Body of pancreas (tissue), 4 donors: ENCODE measurements at regions of chr4 and their contacts with region 1.

Region 1: DNA sequence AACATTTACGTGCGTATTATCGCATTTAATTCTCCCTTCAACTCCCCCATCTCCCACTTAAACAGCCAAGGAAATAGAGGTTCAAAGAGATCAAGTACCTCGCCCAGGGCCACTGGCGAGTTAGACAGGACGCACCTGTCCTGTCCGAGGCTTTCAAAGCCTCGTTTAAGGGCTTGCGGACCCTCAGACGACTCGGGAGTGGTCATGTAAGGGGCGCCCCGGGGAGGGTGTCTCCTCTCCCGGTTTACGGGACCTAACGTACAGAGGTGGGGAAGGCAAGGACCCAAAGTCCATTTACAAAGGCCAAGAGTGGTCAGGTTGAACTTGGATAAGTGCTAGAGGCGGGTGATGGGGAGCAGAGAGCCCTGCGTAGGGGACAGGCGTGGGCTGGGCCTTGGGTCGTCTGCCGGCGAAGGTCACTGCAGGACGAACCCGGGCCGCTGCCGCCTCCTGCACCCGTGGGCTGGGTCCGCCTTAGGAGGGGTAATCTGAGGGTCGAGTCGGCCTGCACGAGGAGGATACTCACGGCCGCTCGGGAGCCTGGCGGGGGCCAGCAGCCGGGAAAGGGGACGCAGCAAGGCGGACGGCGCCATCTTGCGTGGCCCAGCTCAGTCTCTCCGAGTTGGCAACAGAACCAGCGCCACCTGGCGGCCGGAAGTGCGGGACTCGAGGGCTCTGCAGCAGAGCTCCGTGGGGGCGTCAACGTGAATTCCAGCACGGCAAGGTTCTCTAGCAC is 5.9 kb upstream of the NAA15 start:
- DNase-seq: peak; percentile 96 to 98 (median 97)
- ATAC-seq: peak; percentile 96
- H3K4me3 ChIP-seq: peak overlapping the region; percentile 74 to 75
- H3K27ac ChIP-seq: peak overlapping the region; percentile 78 to 91 (median 86)
- H3K4me1 ChIP-seq: peaks cover 29% of the 10 kb centered on the region
- H3K27me3 ChIP-seq: no peaks in the 10 kb centered on the region
- CTCF ChIP-seq: peak; percentile 94 to 97 (median 95)
- POLR2A ChIP-seq: peak; percentile 46 to 78 (median 73)

Region 2: DNA sequence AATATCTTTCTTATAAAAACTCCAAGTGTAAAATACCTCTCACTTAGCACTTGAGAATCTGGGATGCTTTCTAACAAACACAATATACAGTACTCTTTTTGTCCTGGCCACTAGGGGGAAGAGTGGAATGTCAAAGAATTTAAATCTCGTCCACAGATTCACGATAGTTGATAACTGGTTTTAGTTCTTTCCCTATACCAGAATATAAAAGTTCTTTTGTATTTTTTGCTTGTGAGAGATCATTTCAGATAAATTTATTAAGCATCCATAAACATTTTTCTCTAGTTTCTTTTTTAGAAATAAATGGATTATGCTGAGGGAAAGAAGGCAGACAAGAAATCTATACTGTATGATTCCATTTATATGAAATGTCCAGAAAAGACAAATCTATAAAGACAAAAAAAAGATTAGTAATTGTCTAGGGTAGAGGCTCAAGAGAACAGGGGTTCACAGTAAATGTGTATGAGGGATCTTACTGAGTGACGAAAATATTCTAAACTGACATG is 65.8 kb before region 1 on chr4:
- intact Hi-C with region 1: loop called (anchors 10 kb)
- DNase-seq: peak in 2 of 4 donors; percentile 19 to 37
- ATAC-seq: peak; percentile 78
- H3K4me3 ChIP-seq: no peak overlapping the region
- H3K27ac ChIP-seq: no peak overlapping the region
- H3K4me1 ChIP-seq: no peaks in the 10 kb centered on the region
- H3K27me3 ChIP-seq: no peaks in the 10 kb centered on the region
- CTCF ChIP-seq: peak; percentile 41 to 78 (median 67)
- POLR2A ChIP-seq: no peak

Region 3: GRCh38 chr4:139245590-139245989 is 49.8 kb before region 1 on chr4:
- intact Hi-C with region 1: no loop called
- DNase-seq: no peak
- ATAC-seq: no peak
- H3K4me3 ChIP-seq: no peak overlapping the region
- H3K27ac ChIP-seq: no peak overlapping the region
- H3K4me1 ChIP-seq: peaks cover 11% of the 10 kb centered on the region
- H3K27me3 ChIP-seq: no peaks in the 10 kb centered on the region
- CTCF ChIP-seq: no peak
- POLR2A ChIP-seq: no peak

Region 4: GRCh38 chr4:139617683-139618082 is 322.3 kb after region 1 on chr4:
- intact Hi-C with region 1: no loop called
- DNase-seq: no peak
- ATAC-seq: no peak
- H3K4me3 ChIP-seq: no peak overlapping the region
- H3K27ac ChIP-seq: no peak overlapping the region
- H3K4me1 ChIP-seq: no peaks in the 10 kb centered on the region
- H3K27me3 ChIP-seq: no peaks in the 10 kb centered on the region
- CTCF ChIP-seq: peak in 6 of 7 experiments; percentile 21 to 29 (median 28)
- POLR2A ChIP-seq: no peak

Region 5: DNA sequence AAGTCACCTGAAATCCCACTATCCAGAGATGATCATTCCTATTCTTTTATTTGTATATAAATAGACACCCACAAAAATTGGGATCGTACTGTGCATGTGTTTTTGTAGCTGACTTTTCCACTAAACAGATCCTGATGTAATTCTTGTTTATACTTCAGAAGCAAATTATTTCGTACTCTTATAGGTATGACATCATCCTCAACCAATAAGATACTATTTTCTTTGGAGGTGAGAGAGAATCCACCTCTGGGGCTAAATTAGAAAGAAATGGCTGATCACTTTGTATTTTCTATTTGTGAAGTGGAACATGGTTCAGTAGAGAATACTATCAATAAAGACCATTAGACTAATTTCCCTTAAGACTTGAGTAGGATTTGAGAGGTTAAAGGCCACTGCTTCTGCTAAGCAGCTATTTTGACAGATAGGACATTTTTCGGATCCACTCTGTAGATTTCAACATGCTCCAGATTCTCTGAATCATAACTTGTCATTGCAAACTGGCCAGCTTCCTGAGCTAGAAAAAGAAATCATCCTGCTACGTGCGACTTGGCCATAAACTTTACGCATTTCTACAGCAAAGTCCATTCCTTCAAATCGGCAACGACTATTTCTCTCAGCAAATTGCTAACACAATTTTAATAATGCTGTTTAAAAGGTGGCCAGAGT is 425.3 kb after region 1 on chr4:
- intact Hi-C with region 1: no loop called
- DNase-seq: no peak
- ATAC-seq: no peak
- H3K4me3 ChIP-seq: no peak overlapping the region
- H3K27ac ChIP-seq: no peak overlapping the region
- H3K4me1 ChIP-seq: peaks cover 5% of the 10 kb centered on the region
- H3K27me3 ChIP-seq: no peaks in the 10 kb centered on the region
- CTCF ChIP-seq: no peak
- POLR2A ChIP-seq: no peak

Region 6: DNA sequence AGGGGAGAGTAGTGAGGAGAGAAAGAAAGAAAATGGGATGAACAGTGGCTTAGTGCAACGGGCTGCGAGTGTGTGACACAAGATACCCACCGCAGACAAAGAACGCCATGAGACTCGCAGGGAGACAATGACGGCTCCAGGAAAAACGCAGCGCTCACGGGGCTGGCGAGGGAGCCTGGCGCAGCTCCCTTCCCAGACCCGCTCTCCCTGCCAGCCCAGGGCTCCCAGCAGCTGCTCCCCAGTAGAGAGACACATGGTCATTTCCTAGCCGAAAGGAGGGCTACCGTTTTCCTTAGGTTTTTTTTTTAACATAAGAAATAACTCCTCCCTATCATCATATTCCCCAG is 709.1 kb after region 1 on chr4:
- intact Hi-C with region 1: no loop called
- DNase-seq: peak; percentile 52 to 75 (median 62)
- ATAC-seq: peak; percentile 87
- H3K4me3 ChIP-seq: no peak overlapping the region
- H3K27ac ChIP-seq: peak overlapping the region in 3 of 4 donors; percentile 27 to 66 (median 51)
- H3K4me1 ChIP-seq: peaks cover 26% of the 10 kb centered on the region
- H3K27me3 ChIP-seq: no peaks in the 10 kb centered on the region
- CTCF ChIP-seq: no peak
- POLR2A ChIP-seq: peak in 1 of 3 donors; percentile 30